Natural killer cell (primary cell): ENCODE measurements at regions of chr7 and their contacts with region 1.

Region 1: DNA sequence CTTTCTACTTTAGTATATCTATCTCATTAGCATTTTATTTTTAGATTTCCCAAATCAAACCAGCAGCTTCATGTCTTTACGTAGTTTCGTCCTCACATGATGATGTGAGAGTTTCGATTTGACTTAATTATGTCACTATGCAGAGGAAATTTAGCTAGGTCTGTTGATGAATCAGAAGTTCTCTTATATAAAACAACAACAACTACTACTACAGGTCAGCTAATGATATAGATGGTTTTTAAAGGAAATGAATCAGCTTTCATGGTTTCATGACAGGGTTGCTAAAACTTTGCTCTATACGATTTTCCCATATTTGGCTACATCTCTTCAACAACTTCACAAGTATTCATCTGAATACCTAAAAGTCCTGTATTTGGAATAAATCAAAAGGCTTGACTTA is 28.6 kb downstream of the JAZF1 start:
- DNase-seq: peak in 1 of 2 donors; percentile 68
- ATAC-seq: peak; percentile 82 to 92 (median 89)
- H3K4me3 ChIP-seq: no peak overlapping the region
- H3K4me3 Mint-ChIP-seq: peak overlapping the region; percentile 75
- H3K27ac ChIP-seq: peak overlapping the region; percentile 83
- H3K27ac Mint-ChIP-seq: peak overlapping the region; percentile 93 to 94
- H3K4me1 ChIP-seq: peaks cover 46% of the 10 kb centered on the region
- H3K4me1 Mint-ChIP-seq: peaks cover 73 to 82% of the 10 kb centered on the region in 2 donors
- H3K27me3 ChIP-seq: no peaks in the 10 kb centered on the region
- H3K27me3 Mint-ChIP-seq: no peaks in the 10 kb centered on the region
- CTCF ChIP-seq: no peak

Region 2: GRCh38 chr7:28179120-28180030 is 27.4 kb after region 1 on chr7:
- intact Hi-C with region 1: loop called (anchors 1 kb)
- DNase-seq: peak; percentile 75 to 81
- ATAC-seq: peak; percentile 55 to 83 (median 71)
- H3K4me3 ChIP-seq: peak overlapping the region; percentile 27
- H3K4me3 Mint-ChIP-seq: peak overlapping the region; percentile 86
- H3K27ac ChIP-seq: peak overlapping the region; percentile 59
- H3K27ac Mint-ChIP-seq: peak overlapping the region; percentile 85 to 98
- H3K4me1 ChIP-seq: peaks cover 23% of the 10 kb centered on the region
- H3K4me1 Mint-ChIP-seq: peaks cover 61 to 68% of the 10 kb centered on the region in 2 donors
- H3K27me3 ChIP-seq: no peaks in the 10 kb centered on the region
- H3K27me3 Mint-ChIP-seq: no peaks in the 10 kb centered on the region
- CTCF ChIP-seq: no peak

Region 3: GRCh38 chr7:28207486-28208158 is 55.7 kb after region 1 on chr7:
- intact Hi-C with region 1: loop called (anchors 1 kb)
- DNase-seq: peak in 1 of 2 donors; percentile 30
- ATAC-seq: peak in 2 of 3 donors; percentile 32 to 41
- H3K4me3 ChIP-seq: no peak overlapping the region
- H3K4me3 Mint-ChIP-seq: peak overlapping the region; percentile 75
- H3K27ac ChIP-seq: peak overlapping the region; percentile 58
- H3K27ac Mint-ChIP-seq: peak overlapping the region; percentile 73 to 96
- H3K4me1 ChIP-seq: peaks cover 31% of the 10 kb centered on the region
- H3K4me1 Mint-ChIP-seq: peaks cover 73 to 77% of the 10 kb centered on the region in 2 donors
- H3K27me3 ChIP-seq: no peaks in the 10 kb centered on the region
- H3K27me3 Mint-ChIP-seq: no peaks in the 10 kb centered on the region
- CTCF ChIP-seq: no peak